ENCODE measurements at regions of chr1 and their contacts with region 1.

Region 1: DNA sequence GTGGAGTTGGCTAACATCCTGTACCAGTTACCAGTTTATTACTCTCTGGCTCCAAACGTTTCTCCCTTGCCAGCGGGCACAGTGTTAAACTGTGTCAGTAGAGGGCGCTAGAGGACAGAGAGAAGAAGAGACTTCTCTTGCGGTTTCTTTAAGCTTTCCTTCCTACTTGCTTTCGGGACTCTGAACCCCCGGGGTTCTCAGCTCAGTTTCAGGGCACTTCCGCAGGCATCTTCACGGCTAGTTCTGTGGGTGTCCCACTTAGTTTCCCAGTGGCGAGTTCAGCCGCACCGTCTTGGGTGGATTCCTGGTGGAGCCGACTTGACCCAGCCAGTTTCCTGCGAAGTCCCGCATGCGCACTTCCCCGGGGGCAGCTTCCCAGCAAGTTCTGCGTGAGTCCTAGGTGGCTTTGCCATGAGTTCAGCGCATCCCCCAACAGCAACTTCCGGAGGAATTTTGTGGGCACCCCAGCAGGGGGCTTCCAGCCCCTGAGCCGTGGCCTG is 37.9 kb upstream of the BTG2 start:
- DNase-seq: peak; percentile 80
- CTCF ChIP-seq: peak; percentile 94

Region 2: DNA sequence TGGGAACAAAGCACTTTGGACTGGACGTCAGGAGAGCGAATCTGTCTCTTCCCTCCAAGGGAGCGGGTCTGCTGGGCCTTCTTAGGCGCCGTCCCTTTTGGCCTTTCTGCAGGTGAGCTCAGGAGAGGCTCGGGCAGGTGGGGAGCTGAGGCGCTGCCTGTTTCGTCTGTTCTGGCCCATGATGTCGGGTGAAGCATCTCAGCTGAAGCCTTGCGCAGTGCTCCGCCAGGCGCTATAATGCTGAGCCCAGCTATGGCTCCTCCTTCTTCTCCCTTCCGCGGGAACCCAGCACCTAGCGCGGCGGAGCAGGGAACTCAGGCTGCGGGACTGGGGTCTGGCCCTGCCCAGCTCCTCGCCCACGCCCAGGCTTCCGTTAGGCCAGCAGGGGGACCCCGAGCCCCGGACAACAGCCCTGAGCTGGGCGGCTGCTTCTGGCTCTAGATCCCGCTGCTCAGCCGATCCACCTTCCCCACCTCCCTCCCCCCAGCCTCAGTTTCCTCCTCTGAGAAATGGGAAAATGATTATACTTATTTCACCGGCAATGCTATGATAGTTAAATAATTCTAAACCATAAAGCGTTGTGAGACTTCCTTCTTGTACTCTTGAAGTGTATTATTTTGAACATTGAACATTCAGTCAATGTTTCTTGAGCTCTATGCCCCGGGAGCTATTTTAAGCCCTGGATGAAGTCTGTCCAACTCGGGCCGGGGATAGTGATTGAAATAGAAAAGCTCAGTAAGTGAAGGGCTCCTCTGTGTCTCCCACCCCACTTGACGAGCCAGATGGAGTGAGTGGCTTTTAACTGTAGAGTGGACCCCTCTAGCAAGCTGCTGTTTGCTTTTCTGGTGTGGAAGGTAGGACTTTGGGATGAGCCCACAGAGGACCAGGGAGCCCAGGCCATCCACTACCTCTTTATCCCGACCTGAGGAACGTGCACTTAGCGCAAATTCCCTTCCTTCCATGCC is 149.5 kb before region 1 on chr1:
- CTCF ChIA-PET with region 1: interaction called, 15 read pairs
- POLR2A ChIA-PET with region 1: no interaction called
- DNase-seq: peak; percentile 83
- CTCF ChIP-seq: peak; percentile 61

Region 3: GRCh38 chr1:203299169-203299568 is 31.8 kb after region 1 on chr1:
- CTCF ChIA-PET with region 1: interaction called, 291 read pairs
- POLR2A ChIA-PET with region 1: no interaction called
- DNase-seq: no peak
- CTCF ChIP-seq: no peak

Region 4: DNA sequence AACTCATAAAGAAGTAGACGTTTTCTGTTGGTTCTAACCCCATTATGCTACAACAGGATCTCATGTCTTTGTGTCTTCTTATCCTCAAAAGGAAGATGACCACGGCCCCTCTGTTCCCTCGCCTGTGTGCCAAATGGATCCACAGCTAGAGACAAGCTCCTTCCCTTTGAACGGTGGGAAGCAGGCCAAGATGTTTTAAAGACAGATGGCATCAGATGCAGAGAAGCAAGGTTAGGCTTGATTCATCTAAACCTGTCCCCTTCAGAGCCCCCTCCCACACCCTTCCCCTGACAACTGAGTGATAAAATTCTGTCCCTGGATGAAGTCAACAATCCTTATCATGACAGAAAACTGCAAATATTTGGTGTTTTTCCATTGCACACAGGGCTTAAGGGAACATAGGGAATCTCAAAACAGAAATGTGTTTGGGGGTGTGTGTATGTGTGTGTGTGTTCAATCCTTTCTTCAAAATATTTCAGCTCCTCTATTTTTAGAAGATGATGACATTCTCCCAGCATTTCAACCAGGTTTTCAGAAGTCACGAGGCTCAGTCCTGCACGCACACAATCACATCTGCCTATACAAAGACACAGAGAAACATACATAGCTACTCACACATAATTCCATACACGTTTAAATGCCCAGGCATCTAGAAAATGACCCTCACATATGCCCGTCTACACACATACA is 111.3 kb after region 1 on chr1:
- CTCF ChIA-PET with region 1: interaction called, 20 read pairs
- POLR2A ChIA-PET with region 1: no interaction called
- DNase-seq: no peak
- CTCF ChIP-seq: no peak

Region 5: GRCh38 chr1:203486618-203487370 is 219.4 kb after region 1 on chr1:
- CTCF ChIA-PET with region 1: interaction called, 116 read pairs
- POLR2A ChIA-PET with region 1: no interaction called
- DNase-seq: no peak
- CTCF ChIP-seq: no peak

Region 6: GRCh38 chr1:203555076-203555475 is 287.7 kb after region 1 on chr1:
- CTCF ChIA-PET with region 1: no interaction called
- POLR2A ChIA-PET with region 1: no interaction called
- DNase-seq: no peak
- CTCF ChIP-seq: no peak